ENCODE measurements at regions of chr1 and their contacts with region 1.

Region 1: DNA sequence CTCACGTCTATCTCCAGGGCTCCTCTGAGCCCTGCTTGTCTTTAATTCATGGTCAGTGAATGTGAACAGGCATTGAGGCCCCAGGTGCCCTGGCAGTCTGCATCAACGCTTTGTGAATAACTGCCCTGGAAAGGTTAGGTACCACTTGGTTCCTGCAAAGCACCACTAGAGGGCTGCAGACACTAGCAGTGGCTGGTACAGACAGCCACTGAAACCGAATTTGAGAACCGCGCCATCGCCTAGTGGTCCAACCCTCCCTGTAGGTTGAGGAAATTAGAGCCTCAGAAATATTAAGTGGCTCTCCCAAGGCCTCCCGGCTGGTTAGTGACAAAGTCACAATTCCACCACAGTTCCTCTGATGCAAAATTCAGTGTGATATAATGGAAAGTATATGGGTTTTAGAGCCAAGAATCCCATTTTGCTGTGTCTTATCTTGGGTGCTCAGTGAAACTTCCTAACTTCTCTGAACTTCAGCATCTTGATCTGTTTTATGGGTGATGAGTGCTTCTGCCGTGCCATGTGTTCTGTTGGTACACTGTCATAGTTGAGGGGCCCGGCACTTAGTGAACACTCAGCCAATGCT is 46.2 kb upstream of the BCL9 start:
- DNase-seq: peak; percentile 76 to 80
- H3K4me3 ChIP-seq: no peak overlapping the region
- H3K27ac ChIP-seq: no peak overlapping the region
- H3K4me1 ChIP-seq: no peaks in the 10 kb centered on the region
- H3K27me3 ChIP-seq: no peaks in the 10 kb centered on the region
- CTCF ChIP-seq: peak; percentile 75 to 91 (median 84)
- POLR2A ChIP-seq: no peak

Region 2: GRCh38 chr1:147273409-147274336 is 221.4 kb before region 1 on chr1:
- intact Hi-C with region 1: loop called (anchors 5 kb)
- DNase-seq: peak in 1 of 2 donors; percentile 16
- H3K4me3 ChIP-seq: no peak overlapping the region
- H3K27ac ChIP-seq: no peak overlapping the region
- H3K4me1 ChIP-seq: peaks cover 4 to 18% of the 10 kb centered on the region in 2 donors
- H3K27me3 ChIP-seq: no peaks in the 10 kb centered on the region
- CTCF ChIP-seq: peak in 5 of 6 experiments; percentile 33 to 67 (median 63)
- POLR2A ChIP-seq: no peak

Region 3: DNA sequence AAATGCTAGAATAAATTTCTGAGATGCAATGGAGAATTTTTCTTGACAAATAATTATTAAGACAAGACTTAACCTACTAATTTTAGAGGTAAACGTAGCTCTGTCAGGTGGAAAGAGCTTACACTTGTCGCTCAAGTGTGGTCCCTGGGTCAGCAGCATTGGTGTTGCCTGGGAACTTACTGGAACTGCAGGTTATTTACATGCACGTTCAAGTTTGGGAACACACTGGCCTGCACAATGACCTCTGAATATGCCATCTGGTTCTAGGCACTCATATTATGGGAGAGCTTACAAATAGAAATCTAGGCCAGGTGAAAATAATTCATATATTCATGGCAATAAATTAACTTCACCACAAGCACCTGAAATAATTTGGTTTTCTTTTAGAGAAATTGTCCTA is 42.3 kb before region 1 on chr1:
- intact Hi-C with region 1: no loop called
- DNase-seq: no peak
- H3K4me3 ChIP-seq: no peak overlapping the region
- H3K27ac ChIP-seq: no peak overlapping the region
- H3K4me1 ChIP-seq: no peaks in the 10 kb centered on the region
- H3K27me3 ChIP-seq: no peaks in the 10 kb centered on the region
- CTCF ChIP-seq: no peak
- POLR2A ChIP-seq: no peak

Region 4: GRCh38 chr1:147627435-147628110 is 132.5 kb after region 1 on chr1:
- intact Hi-C with region 1: loop called (anchors 2 kb)
- DNase-seq: peak; percentile 63 to 64
- H3K4me3 ChIP-seq: no peak overlapping the region
- H3K27ac ChIP-seq: no peak overlapping the region
- H3K4me1 ChIP-seq: peaks cover 0 to 7% of the 10 kb centered on the region in 2 donors
- H3K27me3 ChIP-seq: no peaks in the 10 kb centered on the region
- CTCF ChIP-seq: peak; percentile 68 to 92 (median 78)
- POLR2A ChIP-seq: no peak

Region 5: GRCh38 chr1:147640553-147641165 is 145.6 kb after region 1 on chr1:
- intact Hi-C with region 1: loop called (anchors 5 kb)
- DNase-seq: peak; percentile 78
- H3K4me3 ChIP-seq: no peak overlapping the region
- H3K27ac ChIP-seq: no peak overlapping the region
- H3K4me1 ChIP-seq: peaks cover 0 to 5% of the 10 kb centered on the region in 2 donors
- H3K27me3 ChIP-seq: no peaks in the 10 kb centered on the region
- CTCF ChIP-seq: peak; percentile 18 to 87 (median 72)
- POLR2A ChIP-seq: no peak

Region 6: GRCh38 chr1:147890177-147890790 is 395.2 kb after region 1 on chr1:
- intact Hi-C with region 1: loop called (anchors 5 kb)
- DNase-seq: peak; percentile 61 to 73
- H3K4me3 ChIP-seq: no peak overlapping the region
- H3K27ac ChIP-seq: no peak overlapping the region
- H3K4me1 ChIP-seq: no peaks in the 10 kb centered on the region
- H3K27me3 ChIP-seq: no peaks in the 10 kb centered on the region
- CTCF ChIP-seq: peak in 4 of 6 experiments; percentile 33 to 48 (median 44)
- POLR2A ChIP-seq: no peak